Activated CD4-positive, alpha-beta T cell treated with anti-CD3 and anti-CD28 coated beads for 36 hours (primary cell): ENCODE measurements at regions of chr5 and their contacts with region 1.

Region 1: GRCh38 chr5:154647114-154647760 is 107.9 kb upstream of the LARP1 start:
- DNase-seq: peak; percentile 35
- ATAC-seq: peak; percentile 63
- H3K4me3 Mint-ChIP-seq: peak overlapping the region; percentile 57
- H3K27ac Mint-ChIP-seq: no peak overlapping the region
- H3K4me1 Mint-ChIP-seq: peaks cover 15% of the 10 kb centered on the region
- H3K27me3 Mint-ChIP-seq: peaks cover 19% of the 10 kb centered on the region

Region 2: DNA sequence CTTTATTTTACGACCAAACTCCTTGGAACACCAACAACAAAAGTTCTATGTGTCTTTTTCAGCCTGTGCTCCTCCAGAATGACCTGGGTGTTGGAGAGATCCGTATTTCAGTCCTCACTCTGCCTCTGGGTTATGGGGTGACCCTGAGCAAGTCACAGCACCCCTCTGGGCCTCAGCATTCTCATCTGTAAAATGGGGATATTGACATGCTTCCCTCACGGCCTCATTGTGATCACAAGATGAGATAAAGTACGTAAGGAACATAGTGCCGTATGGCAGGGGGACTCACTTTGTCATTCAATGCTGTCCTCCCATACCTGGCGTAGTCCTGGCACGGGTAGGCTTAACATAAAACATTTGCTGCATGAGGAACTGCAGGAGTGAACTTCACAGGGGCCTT is 46.2 kb before region 1 on chr5:
- CTCF ChIA-PET with region 1: no interaction called
- POLR2A ChIA-PET with region 1: no interaction called
- intact Hi-C with region 1: no loop called
- DNase-seq: no peak
- ATAC-seq: no peak
- H3K4me3 Mint-ChIP-seq: no peak overlapping the region
- H3K27ac Mint-ChIP-seq: no peak overlapping the region
- H3K4me1 Mint-ChIP-seq: no peaks in the 10 kb centered on the region
- H3K27me3 Mint-ChIP-seq: peaks cover 50% of the 10 kb centered on the region

Region 3: GRCh38 chr5:154674029-154674428 is 26.8 kb after region 1 on chr5:
- CTCF ChIA-PET with region 1: interaction called, 10 read pairs
- POLR2A ChIA-PET with region 1: no interaction called
- intact Hi-C with region 1: no loop called
- DNase-seq: no peak
- ATAC-seq: no peak
- H3K4me3 Mint-ChIP-seq: no peak overlapping the region
- H3K27ac Mint-ChIP-seq: no peak overlapping the region
- H3K4me1 Mint-ChIP-seq: no peaks in the 10 kb centered on the region
- H3K27me3 Mint-ChIP-seq: no peaks in the 10 kb centered on the region

Region 4: GRCh38 chr5:154683101-154683880 is 36.1 kb after region 1 on chr5:
- CTCF ChIA-PET with region 1: interaction called, 10 read pairs
- POLR2A ChIA-PET with region 1: no interaction called
- intact Hi-C with region 1: no loop called
- DNase-seq: no peak
- ATAC-seq: peak; percentile 38
- H3K4me3 Mint-ChIP-seq: peak overlapping the region; percentile 56
- H3K27ac Mint-ChIP-seq: no peak overlapping the region
- H3K4me1 Mint-ChIP-seq: peaks cover 5% of the 10 kb centered on the region
- H3K27me3 Mint-ChIP-seq: peaks cover 11% of the 10 kb centered on the region

Region 5: GRCh38 chr5:154811653-154812365 is 164.6 kb after region 1 on chr5:
- CTCF ChIA-PET with region 1: interaction called, 8 read pairs
- POLR2A ChIA-PET with region 1: interaction called, 3 read pairs
- intact Hi-C with region 1: loop called (anchors 1 kb)
- DNase-seq: peak; percentile 81
- ATAC-seq: peak; percentile 87
- H3K4me3 Mint-ChIP-seq: no peak overlapping the region
- H3K27ac Mint-ChIP-seq: peak overlapping the region; percentile 58
- H3K4me1 Mint-ChIP-seq: peaks cover 24% of the 10 kb centered on the region
- H3K27me3 Mint-ChIP-seq: no peaks in the 10 kb centered on the region

Region 6: DNA sequence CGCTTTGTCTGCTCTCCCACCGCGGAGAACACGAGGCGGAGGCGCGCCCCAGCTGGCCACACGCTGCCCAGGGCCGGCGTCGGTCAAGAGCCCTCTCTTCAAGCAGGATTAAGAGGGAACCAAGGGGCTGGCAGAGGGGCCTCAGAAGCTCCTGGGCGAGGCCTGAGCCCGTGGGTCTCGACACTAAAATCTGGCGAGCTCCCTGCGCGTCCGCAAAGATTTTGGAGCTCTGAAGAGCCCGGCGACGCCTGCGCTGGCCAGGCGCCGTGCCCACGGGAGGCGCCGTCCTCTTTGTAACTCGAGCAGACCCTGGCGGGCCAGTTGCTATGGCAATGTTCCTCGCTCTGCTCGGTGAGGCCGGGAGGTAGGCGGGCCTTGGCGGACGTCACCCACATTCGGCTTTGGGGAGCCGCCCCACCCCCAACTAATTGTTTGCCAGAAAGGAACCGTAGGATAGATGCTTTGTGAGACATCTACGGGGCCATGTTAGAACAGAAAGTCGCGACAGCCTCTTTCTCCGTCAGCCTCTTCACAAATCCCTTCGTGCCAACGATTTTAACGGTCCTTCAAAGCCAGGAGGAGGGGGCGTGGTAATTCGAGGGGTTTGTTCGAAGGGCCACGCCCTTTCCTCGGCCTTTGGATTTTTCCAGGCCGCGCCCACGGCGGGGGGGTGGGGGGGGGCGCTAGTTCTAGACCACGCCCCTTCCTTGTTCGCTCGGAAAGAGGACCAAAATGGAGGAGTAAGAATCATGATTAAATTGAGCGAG is 210.5 kb after region 1 on chr5:
- CTCF ChIA-PET with region 1: interaction called, 3 read pairs
- POLR2A ChIA-PET with region 1: no interaction called
- intact Hi-C with region 1: loop called (anchors 2 kb)
- DNase-seq: peak; percentile 90
- ATAC-seq: peak; percentile 59
- H3K4me3 Mint-ChIP-seq: peak overlapping the region; percentile 99
- H3K27ac Mint-ChIP-seq: peak overlapping the region; percentile 98
- H3K4me1 Mint-ChIP-seq: peaks cover 34% of the 10 kb centered on the region
- H3K27me3 Mint-ChIP-seq: no peaks in the 10 kb centered on the region

Region 7: DNA sequence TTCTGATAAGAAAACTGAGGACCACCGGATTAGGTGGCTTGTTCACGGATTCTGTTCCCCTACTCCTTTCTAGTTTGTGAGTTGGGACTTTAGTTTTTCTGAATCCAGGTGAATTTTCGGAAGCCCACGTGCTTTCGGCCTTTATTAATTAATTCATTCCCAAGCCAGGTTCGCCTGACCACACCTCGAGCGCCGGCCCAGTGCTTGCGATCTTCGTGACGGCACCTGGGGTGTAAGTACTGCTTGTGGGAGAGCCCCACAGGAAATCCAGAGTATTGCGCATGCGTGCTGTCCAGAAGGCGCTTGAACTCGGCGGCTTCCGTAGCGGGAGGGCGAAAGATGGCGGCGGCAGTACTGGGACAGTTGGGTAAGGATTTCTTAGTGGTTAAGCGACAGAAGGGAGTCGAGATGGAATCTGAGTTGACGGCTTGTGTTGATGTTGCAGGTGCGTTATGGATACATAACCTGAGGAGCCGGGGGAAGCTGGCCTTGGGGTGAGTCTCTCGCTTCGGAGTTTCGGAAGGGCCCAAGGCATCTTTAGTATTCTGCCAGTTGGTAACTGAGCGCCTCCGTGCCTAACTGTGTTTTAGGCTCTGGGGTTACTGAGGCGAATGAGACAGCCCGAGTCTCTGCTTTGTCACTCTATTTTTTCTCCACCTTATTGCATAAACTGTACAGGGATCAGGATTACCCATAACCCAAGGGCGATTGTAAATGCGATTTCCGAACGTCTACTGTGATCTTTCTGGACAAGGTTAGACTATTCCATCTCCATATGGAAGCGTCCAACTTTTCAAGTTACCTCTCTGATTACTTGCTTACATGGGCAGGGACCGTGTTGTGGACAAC is 293.8 kb after region 1 on chr5 and contains the start of gene MRPL22:
- CTCF ChIA-PET with region 1: interaction called, 5 read pairs
- POLR2A ChIA-PET with region 1: no interaction called
- intact Hi-C with region 1: loop called in 1 of 2 experiments (anchors 5 kb)
- DNase-seq: peak; percentile 97
- ATAC-seq: peak; percentile 72
- H3K4me3 Mint-ChIP-seq: peak within 1 kb of the TSS; percentile 97
- H3K27ac Mint-ChIP-seq: peak within 1 kb of the TSS; percentile 96
- H3K4me1 Mint-ChIP-seq: peaks cover 40% of the 10 kb centered on the region
- H3K27me3 Mint-ChIP-seq: no peaks in the 10 kb centered on the region
- total RNA-seq, gene MRPL22: 77.2 to 86.7 TPM

Region 8: DNA sequence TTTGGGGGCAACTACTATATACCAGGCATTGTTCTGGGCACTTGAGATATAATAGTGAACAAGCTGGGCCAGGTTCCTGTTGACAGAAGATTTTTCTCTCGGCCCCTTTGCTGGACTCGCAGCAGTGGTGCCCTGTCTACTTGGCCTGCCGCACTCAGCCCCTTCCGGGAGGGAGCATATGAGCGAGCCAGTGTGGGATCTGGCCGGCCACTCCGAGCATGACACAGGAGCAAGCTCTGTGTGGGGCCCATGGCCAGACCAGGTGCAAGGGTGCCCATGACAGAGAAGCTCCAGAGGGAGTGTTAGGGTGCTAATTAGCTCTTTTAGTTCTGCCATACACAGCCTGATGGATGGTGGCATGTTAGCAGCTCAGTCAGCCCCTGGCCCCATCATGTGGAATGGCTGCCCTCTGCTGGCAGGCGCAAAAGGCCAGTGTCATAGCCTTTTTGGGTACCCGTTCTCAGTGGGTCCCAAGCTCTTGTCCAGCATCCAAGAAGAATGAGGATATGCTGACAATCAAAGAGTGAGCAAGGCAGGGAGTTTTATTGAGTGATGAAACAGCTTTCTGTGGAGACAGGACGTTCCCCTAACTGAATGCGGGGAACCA is 357.0 kb after region 1 on chr5:
- CTCF ChIA-PET with region 1: interaction called, 10 read pairs
- POLR2A ChIA-PET with region 1: no interaction called
- intact Hi-C with region 1: loop called in 1 of 2 experiments (anchors 10 kb)
- DNase-seq: peak; percentile 60
- ATAC-seq: peak; percentile 51
- H3K4me3 Mint-ChIP-seq: no peak overlapping the region
- H3K27ac Mint-ChIP-seq: no peak overlapping the region
- H3K4me1 Mint-ChIP-seq: no peaks in the 10 kb centered on the region
- H3K27me3 Mint-ChIP-seq: peaks cover 19% of the 10 kb centered on the region